ENCODE measurements at regions of chr1 and their contacts with region 1.

Region 1: GRCh38 chr1:35202048-35202719 is 9.2 kb upstream of the SFPQ start:
- DNase-seq: peak; percentile 78
- H3K4me3 Mint-ChIP-seq: no peak overlapping the region
- H3K27ac Mint-ChIP-seq: no peak overlapping the region
- H3K4me1 Mint-ChIP-seq: no peaks in the 10 kb centered on the region
- H3K27me3 Mint-ChIP-seq: no peaks in the 10 kb centered on the region
- CTCF ChIP-seq: peak; percentile 82

Region 2: DNA sequence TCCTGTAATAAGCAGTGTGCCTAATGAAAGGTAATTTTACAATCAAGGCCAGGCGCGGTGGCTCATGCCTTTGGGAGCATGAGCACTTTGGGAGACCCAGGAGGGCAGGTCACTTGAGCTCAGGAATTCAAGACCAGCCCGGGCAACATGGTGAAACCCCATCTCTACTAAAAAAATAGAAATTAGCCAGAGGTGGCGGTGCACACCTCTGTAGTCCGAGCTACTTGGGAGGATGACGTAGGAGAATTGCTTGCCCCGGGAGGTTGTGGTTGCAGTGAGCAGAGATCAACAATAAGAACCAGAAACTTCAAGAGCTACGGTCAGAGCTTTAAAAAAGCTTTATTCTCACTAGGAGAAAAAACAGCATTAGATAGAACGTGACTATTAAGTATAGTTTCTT is 44.3 kb before region 1 on chr1:
- CTCF ChIA-PET with region 1: no interaction called
- intact Hi-C with region 1: no loop called
- DNase-seq: no peak
- H3K4me3 Mint-ChIP-seq: no peak overlapping the region
- H3K27ac Mint-ChIP-seq: no peak overlapping the region
- H3K4me1 Mint-ChIP-seq: no peaks in the 10 kb centered on the region
- H3K27me3 Mint-ChIP-seq: no peaks in the 10 kb centered on the region
- CTCF ChIP-seq: no peak

Region 3: DNA sequence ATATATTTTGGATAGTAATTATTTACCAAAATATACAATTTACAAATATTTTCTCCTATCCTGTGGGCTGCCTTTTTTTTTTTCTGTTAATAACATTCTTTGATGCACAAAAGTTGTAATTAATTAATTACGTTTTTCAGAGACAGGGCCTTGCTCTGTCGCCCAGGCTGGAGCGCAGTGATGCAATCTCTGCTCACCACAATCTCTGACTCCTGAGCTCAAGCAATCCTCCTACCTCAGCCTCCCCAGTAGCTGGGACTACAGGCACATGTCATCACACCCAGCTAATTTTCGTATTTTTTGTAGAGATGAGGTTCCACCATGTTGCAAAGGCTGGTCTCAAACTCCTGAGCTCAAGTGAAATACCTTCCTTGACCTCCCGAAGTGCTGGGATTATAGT is 45.1 kb after region 1 on chr1:
- CTCF ChIA-PET with region 1: no interaction called
- intact Hi-C with region 1: no loop called
- DNase-seq: no peak
- H3K4me3 Mint-ChIP-seq: no peak overlapping the region
- H3K27ac Mint-ChIP-seq: no peak overlapping the region
- H3K4me1 Mint-ChIP-seq: no peaks in the 10 kb centered on the region
- H3K27me3 Mint-ChIP-seq: no peaks in the 10 kb centered on the region
- CTCF ChIP-seq: no peak

Region 4: DNA sequence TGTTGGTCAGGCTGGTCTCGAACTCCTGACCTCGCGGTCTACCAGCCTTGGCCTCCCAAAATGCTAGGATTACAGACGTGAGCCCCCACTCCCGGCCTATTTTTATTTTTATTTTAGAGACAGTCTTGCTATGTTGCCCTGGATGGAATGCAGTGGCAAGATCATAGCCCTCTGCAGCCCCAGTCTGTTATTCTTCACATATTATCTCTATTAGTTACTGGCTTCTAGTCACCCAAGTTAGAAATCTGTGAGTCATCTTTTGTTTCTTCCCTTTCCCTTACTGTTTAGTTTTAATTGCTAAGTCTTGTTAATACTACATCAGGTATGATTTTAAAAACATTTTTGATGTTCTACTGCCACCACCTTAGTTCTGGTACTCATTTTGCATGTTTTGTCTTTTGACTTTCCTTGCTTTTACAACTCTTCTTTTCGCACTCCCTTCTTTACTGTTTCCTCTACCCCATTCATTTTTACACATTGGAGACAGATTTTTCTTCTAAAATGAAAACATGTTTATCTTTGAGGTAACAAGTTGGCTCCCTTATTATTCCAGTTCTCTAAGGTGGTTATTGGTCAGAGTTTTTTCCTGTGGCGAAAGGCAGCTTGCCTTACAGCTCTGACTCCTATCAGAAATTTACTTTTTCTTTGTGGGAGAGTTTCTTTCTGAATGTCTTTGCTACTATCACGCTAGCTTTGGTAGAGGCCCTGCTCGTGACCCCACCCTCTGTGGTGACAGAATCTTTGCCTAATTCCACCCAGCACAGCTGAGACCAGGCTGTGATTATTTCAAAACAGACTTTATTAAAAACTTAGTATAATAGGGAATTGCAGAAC is 85.8 kb after region 1 on chr1:
- CTCF ChIA-PET with region 1: no interaction called
- intact Hi-C with region 1: loop called (anchors 2 kb)
- DNase-seq: no peak
- H3K4me3 Mint-ChIP-seq: no peak overlapping the region
- H3K27ac Mint-ChIP-seq: no peak overlapping the region
- H3K4me1 Mint-ChIP-seq: peaks cover 29% of the 10 kb centered on the region
- H3K27me3 Mint-ChIP-seq: no peaks in the 10 kb centered on the region
- CTCF ChIP-seq: no peak

Region 5: DNA sequence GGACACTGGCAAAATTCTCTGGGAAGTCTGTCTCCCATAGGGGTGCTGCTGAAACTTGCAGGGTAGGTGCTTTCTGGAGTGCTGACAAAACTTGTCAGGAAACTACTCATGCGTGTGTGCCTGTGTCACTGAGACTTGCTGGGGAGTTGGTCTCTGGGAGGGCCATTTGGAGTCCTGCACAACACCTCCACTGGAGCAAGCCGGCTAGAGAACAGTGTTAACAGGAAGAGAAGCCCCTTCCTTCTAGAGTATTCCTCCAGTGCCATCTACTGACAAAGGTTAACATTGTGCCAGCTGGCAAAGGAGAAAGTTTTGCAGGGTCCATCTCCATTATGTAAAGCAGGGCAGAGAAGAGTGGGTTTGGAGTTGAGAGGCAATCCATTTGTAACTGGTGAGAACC is 96.3 kb after region 1 on chr1:
- CTCF ChIA-PET with region 1: interaction called, 8 read pairs
- intact Hi-C with region 1: loop called (anchors 1 kb)
- DNase-seq: peak; percentile 22
- H3K4me3 Mint-ChIP-seq: no peak overlapping the region
- H3K27ac Mint-ChIP-seq: no peak overlapping the region
- H3K4me1 Mint-ChIP-seq: no peaks in the 10 kb centered on the region
- H3K27me3 Mint-ChIP-seq: no peaks in the 10 kb centered on the region
- CTCF ChIP-seq: no peak

Region 6: GRCh38 chr1:35386959-35387358 is 184.8 kb after region 1 on chr1:
- CTCF ChIA-PET with region 1: no interaction called
- intact Hi-C with region 1: loop called (anchors 10 kb)
- DNase-seq: no peak
- H3K4me3 Mint-ChIP-seq: no peak overlapping the region
- H3K27ac Mint-ChIP-seq: no peak overlapping the region
- H3K4me1 Mint-ChIP-seq: no peaks in the 10 kb centered on the region
- H3K27me3 Mint-ChIP-seq: no peaks in the 10 kb centered on the region
- CTCF ChIP-seq: no peak

Region 7: GRCh38 chr1:36320291-36320761 is 1118.1 kb after region 1 on chr1:
- CTCF ChIA-PET with region 1: no interaction called
- intact Hi-C with region 1: no loop called
- DNase-seq: no peak
- H3K4me3 Mint-ChIP-seq: no peak overlapping the region
- H3K27ac Mint-ChIP-seq: no peak overlapping the region
- H3K4me1 Mint-ChIP-seq: no peaks in the 10 kb centered on the region
- H3K27me3 Mint-ChIP-seq: no peaks in the 10 kb centered on the region
- CTCF ChIP-seq: no peak

Measured in Calu3 (cell line).